ENCODE measurements at regions of chr3 and their contacts with region 1.

Region 1: DNA sequence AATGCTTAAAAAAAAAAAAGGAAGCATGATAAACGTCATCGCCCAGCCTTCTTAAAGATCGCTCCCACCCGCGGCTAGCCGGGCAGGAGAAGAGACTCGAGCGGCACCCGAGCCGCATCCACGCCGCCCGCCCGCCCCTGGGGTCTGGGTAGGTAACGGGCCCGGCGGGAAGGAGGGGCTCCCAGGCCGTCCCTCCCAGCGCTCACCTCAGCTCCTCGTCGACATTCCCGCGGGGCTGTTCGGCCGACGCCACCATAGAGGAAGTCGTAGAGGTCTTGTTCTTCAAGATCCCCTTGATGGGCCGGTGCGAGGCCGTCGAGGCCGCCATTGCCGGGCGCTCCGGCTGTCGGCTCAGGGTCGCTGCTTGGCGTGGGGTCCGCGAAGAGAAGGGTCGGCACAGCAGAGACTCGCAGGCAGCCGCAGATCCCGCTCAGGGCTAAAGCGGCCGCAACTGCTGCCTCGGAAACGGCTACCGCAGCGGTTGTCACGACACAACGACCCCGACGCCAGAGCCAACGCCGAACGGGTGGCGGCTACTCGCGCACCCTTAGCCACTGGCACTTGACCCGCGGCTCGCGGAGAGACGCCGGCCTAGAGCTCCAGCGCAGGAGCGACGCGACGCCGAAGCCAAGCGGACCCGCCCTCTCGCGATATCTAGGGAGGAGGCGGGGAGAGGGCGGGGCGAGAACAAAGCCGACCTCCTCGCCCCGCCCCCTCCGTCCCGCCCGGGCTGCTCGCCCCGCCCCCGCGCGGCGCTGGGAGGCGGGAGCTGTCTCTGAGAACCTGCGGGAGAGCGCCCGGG is at the start of gene PPP1R2:
- DNase-seq: peak; percentile 54 to 88
- ATAC-seq: peak; percentile 88 to 95
- H3K4me3 ChIP-seq: peak within 1 kb of the TSS; percentile 93
- H3K27ac ChIP-seq: peak within 1 kb of the TSS; percentile 86 to 91
- H3K4me1 ChIP-seq: peaks cover 29% of the 10 kb centered on the region; the same call in 2 of the 3 replicates
- CTCF ChIP-seq: no peak
- EP300 ChIP-seq: no peak
- POLR2A ChIP-seq: peak; percentile 93
- RAD21 ChIP-seq: no peak
- polyA plus RNA-seq, gene PPP1R2: 44.0 and 47.3 TPM in 2 replicates

Region 2: GRCh38 chr3:195352895-195353488 is 189.9 kb before region 1 on chr3:
- CTCF ChIA-PET with region 1: no interaction called
- POLR2A ChIA-PET with region 1: interaction called, 11 read pairs
- DNase-seq: peak in 1 of 2 experiments; percentile 54
- ATAC-seq: peak; percentile 66 to 89
- H3K4me3 ChIP-seq: no peak overlapping the region
- H3K27ac ChIP-seq: peak overlapping the region; percentile 77 to 83
- H3K4me1 ChIP-seq: peaks cover 17% of the 10 kb centered on the region; the same call in 2 of the 3 replicates
- CTCF ChIP-seq: no peak
- EP300 ChIP-seq: no peak
- POLR2A ChIP-seq: no peak
- RAD21 ChIP-seq: no peak

Region 3: GRCh38 chr3:195609229-195609628 is 66.3 kb after region 1 on chr3:
- CTCF ChIA-PET with region 1: no interaction called
- POLR2A ChIA-PET with region 1: no interaction called
- DNase-seq: no peak
- ATAC-seq: no peak
- H3K4me3 ChIP-seq: no peak overlapping the region
- H3K27ac ChIP-seq: no peak overlapping the region
- H3K4me1 ChIP-seq: no peaks in the 10 kb centered on the region
- CTCF ChIP-seq: no peak
- EP300 ChIP-seq: no peak
- POLR2A ChIP-seq: no peak
- RAD21 ChIP-seq: no peak

Measured in A549 (cell line).